Caco-2 (cell line): ENCODE measurements at regions of chr20 and their contacts with region 1.

Region 1: DNA sequence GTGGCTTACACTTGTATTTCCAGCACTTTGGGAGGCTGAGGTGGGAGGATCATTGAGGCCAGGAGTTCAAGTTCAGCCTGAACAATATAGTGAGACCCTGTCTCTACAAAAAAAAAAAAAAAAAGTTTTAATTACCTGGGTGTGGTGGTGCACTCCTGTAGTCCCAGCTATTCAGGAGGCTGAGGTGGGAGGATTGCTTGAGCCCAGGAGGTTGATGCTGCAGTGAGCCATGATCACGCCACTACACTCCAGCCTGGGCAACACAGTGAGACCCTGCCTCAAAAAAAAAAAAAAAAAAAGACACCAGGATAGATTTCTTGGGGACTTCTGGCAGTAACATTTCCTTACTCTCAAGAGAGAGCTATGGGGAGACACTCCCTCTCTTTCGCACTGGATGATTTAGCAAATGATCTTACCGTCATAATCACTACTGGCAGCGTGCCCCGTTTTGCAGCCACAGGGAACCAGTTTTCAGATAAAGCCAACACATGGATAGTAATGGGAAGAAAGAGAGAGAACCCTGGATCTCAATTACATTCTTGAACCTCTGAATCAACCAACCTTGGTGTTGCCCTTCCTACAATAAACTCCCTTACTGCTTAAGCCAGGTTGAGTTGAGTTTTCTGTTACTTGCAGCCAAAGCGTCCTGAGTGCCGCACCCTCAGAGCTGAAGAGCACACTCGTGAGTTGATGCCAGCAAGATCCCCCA is 18.1 kb upstream of the PTPN1 start:
- DNase-seq: no peak
- H3K4me3 ChIP-seq: no peak overlapping the region
- H3K4me3 Mint-ChIP-seq: no peak overlapping the region
- H3K27ac Mint-ChIP-seq: no peak overlapping the region
- H3K4me1 ChIP-seq: no peaks in the 10 kb centered on the region
- H3K4me1 Mint-ChIP-seq: no peaks in the 10 kb centered on the region
- H3K27me3 ChIP-seq: no peaks in the 10 kb centered on the region
- H3K27me3 Mint-ChIP-seq: no peaks in the 10 kb centered on the region
- CTCF ChIP-seq: no peak

Region 2: DNA sequence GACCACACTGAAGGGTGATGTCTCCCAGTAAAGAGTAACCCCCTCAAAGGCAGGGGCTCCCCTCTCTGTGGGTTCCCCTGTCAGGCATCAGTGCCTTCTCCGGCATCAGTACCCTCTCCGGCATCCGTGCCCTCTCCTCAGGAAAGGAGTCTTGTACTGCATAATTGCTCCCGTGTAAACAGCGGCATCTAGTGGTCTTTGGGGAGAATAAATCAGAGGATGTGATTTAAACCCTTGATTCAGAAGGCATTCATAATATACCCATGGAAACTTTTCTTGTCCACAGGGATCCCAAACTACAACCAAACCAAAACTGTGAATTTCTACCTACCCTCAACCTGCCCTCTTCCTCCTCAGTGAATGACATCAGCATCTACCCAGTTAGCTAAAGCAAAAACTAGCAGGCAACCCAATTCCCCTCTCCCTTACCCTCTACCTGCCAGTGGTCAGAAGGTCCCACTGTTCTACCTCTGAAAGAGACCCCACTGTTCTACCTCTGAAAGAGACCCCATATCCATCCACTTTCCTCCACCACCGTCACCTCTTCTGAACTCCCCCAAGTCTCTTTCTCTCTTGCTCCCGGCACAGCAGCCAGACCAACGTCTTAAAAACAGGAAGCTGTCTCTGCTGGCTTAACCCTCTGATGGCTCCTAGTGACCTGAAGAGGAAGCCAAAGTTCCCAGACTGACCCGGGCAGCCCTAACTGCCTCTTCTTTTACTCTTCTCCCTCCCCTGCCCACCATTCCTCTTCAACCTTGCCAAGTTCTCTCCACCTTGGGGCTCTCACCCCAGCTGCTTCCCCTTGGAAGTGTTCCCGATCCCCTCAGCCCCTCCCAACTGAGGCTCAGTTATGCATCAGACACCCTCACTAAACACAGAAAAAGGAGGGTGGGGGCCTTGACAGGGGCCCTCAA is 406.4 kb before region 1 on chr20:
- CTCF ChIA-PET with region 1: interaction called, 13 read pairs
- POLR2A ChIA-PET with region 1: no interaction called
- intact Hi-C with region 1: no loop called
- DNase-seq: peak; percentile 74 to 80
- H3K4me3 ChIP-seq: no peak overlapping the region
- H3K4me3 Mint-ChIP-seq: no peak overlapping the region
- H3K27ac Mint-ChIP-seq: no peak overlapping the region
- H3K4me1 ChIP-seq: peaks cover 8% of the 10 kb centered on the region; the same call in 1 of the 2 replicates
- H3K4me1 Mint-ChIP-seq: peaks cover 24% of the 10 kb centered on the region
- H3K27me3 ChIP-seq: no peaks in the 10 kb centered on the region
- H3K27me3 Mint-ChIP-seq: no peaks in the 10 kb centered on the region
- CTCF ChIP-seq: peak; percentile 95 to 96

Region 3: GRCh38 chr20:52303281-52303950 is 1811.3 kb after region 1 on chr20:
- CTCF ChIA-PET with region 1: interaction called, 15 read pairs
- POLR2A ChIA-PET with region 1: no interaction called
- intact Hi-C with region 1: no loop called
- DNase-seq: no peak
- H3K4me3 ChIP-seq: no peak overlapping the region
- H3K4me3 Mint-ChIP-seq: no peak overlapping the region
- H3K27ac Mint-ChIP-seq: no peak overlapping the region
- H3K4me1 ChIP-seq: no peaks in the 10 kb centered on the region
- H3K4me1 Mint-ChIP-seq: no peaks in the 10 kb centered on the region
- H3K27me3 ChIP-seq: peaks cover 2% of the 10 kb centered on the region; the same call in 1 of the 2 replicates
- H3K27me3 Mint-ChIP-seq: peaks cover 28% of the 10 kb centered on the region
- CTCF ChIP-seq: no peak